ENCODE measurements at regions of chr5 and their contacts with region 1.

Region 1: GRCh38 chr5:81751009-81751835 is at the start of gene SSBP2:
- DNase-seq: peak; percentile 97 to 100
- H3K4me3 ChIP-seq: peak within 1 kb of the TSS; percentile 86 to 94
- H3K27ac ChIP-seq: peak within 1 kb of the TSS; percentile 98 to 100
- H3K4me1 ChIP-seq: peaks cover 8 to 38% of the 10 kb centered on the region in 2 donors
- H3K27me3 ChIP-seq: no peaks in the 10 kb centered on the region
- CTCF ChIP-seq: no peak
- total RNA-seq, gene SSBP2: 22.4 TPM

Region 2: DNA sequence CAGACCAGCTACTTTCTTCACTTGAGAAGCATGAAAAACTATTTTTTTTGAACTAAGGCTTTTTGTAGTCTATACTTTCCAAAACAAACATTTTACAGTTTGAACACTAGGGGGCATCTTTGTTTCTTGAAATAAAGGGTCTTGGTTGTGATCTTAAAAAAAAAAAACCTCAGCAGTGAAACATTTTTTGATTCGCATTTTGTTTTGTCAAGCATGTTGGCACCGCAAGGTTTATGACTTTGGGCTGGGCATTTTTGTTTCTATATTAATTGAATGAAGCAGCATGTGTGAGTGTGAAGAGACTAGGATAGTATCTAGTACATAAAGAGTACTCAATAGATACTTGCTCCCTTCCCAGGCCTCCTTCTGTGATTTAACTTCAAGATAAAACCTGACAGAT is 325.7 kb before region 1 on chr5:
- intact Hi-C with region 1: loop called (anchors 2 kb)
- DNase-seq: no peak
- H3K4me3 ChIP-seq: no peak overlapping the region
- H3K27ac ChIP-seq: peak overlapping the region; percentile 22 to 51
- H3K4me1 ChIP-seq: peaks cover 0 to 6% of the 10 kb centered on the region in 2 donors
- H3K27me3 ChIP-seq: no peaks in the 10 kb centered on the region
- CTCF ChIP-seq: peak; percentile 41 to 62 (median 54)

Region 3: DNA sequence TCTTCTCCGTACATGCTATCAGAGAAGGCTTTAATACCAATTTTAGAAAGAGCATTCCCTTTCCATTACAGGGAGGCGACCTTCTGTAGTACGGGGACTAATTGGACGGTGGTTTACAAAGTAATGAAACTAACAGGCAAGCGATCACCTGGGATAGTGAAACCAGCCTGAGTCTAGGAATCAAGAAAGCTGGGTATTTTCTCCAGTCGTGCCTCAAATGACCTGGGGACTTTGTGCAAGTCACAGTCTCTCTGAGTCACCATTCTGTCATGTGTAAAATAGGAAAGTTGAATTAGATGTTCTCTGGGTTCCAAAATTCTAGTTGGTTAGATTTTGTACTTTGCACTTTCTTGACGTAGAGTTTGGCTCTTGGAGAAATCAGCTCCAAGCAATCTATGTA is 22.4 kb after region 1 on chr5:
- intact Hi-C with region 1: loop called (anchors 1 kb)
- DNase-seq: no peak
- H3K4me3 ChIP-seq: peak overlapping the region in 1 of 2 donors; percentile 12
- H3K27ac ChIP-seq: peak overlapping the region; percentile 83 to 96
- H3K4me1 ChIP-seq: peaks cover 12 to 27% of the 10 kb centered on the region in 2 donors
- H3K27me3 ChIP-seq: no peaks in the 10 kb centered on the region
- CTCF ChIP-seq: no peak

Region 4: DNA sequence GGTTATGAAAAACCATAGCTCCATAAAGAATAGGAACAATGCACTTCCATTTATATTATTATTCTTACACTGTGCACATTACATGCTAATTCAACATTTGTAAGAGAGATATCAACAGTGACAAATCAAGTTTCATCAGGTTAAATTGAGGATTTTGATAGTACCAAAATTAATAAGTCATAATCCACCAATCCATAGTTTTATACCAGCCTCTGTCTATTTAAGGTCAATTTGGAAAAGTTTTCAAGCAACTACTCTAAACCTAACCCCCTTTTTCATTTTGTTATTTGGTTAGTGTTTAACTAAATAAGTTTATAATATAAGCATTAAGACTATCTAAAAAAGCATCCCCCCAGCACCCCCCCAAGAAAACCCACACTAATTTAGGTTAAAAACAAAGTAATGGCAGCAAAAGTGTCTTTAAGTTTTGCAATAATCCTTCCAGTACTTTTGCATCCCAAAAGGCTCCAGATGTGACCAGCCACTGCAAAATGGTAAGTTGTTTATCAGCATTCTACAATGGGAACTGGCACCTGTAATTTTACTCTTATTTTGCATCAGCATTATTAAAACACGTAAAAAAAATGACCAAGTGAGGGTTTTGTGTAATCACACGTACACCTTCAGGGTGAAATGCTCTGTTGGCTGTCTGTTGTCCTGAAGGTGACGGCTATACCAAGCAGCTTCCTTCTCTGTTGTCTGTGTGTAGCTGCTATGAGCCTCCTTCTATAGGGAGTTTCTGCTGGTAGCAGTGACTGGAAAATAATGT is 36.4 kb after region 1 on chr5:
- intact Hi-C with region 1: loop called (anchors 1 kb)
- DNase-seq: peak in 1 of 2 donors; percentile 83
- H3K4me3 ChIP-seq: peak overlapping the region in 1 of 2 donors; percentile 33
- H3K27ac ChIP-seq: peak overlapping the region in 1 of 2 donors; percentile 12
- H3K4me1 ChIP-seq: peaks cover 0 to 13% of the 10 kb centered on the region in 2 donors
- H3K27me3 ChIP-seq: no peaks in the 10 kb centered on the region
- CTCF ChIP-seq: no peak

Region 5: DNA sequence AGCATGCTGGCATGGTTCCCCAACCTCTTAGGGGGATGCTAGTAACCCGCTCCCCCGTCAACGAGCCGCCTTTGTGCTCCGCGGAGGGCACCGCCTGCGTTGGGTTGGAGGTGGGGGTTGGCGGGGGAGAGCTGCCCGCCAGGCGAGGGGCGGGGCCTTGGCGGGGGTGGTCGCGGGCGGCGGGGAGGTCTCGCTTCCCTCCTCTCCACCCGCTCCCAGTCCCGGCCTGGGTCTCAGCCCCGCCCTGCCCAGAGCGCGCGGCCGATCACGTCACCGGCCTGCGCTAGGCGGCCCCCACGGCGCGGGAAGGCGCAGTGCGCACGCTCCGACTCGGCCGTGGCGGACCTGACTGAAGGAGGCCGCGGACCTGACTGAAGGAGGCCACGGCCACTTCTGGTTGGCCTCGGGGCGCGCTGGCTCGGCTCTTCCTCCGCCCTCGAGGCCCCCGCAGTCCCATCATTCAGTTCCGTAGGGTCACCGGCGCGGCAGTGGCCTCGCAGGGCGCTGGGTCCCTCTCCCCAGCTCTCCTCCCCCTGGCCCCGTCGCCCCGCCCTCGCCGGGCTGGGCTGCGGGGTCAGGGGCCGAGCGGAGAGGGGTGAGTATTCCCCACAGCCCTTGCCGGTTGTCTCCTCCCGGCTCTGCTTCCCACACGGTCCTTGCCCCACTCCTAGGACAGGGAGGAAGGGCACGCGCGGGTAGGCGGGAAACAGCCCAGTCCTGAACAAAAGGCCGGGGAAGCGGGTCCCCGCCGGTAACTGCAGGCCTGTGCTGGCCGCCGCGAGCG is 220.7 kb after region 1 on chr5 and contains the start of gene ATG10:
- intact Hi-C with region 1: loop called (anchors 1 kb)
- DNase-seq: peak; percentile 58 to 94
- H3K4me3 ChIP-seq: peak within 1 kb of the TSS; percentile 81 to 85
- H3K27ac ChIP-seq: peak within 1 kb of the TSS; percentile 96 to 100
- H3K4me1 ChIP-seq: no peaks in the 10 kb centered on the region
- H3K27me3 ChIP-seq: no peaks in the 10 kb centered on the region
- CTCF ChIP-seq: no peak
- total RNA-seq, gene ATG10: 8.4 TPM

Region 6: GRCh38 chr5:82295144-82295543 is 543.9 kb after region 1 on chr5:
- intact Hi-C with region 1: no loop called
- DNase-seq: no peak
- H3K4me3 ChIP-seq: no peak overlapping the region
- H3K27ac ChIP-seq: no peak overlapping the region
- H3K4me1 ChIP-seq: no peaks in the 10 kb centered on the region
- H3K27me3 ChIP-seq: no peaks in the 10 kb centered on the region
- CTCF ChIP-seq: no peak

Measured in ascending aorta (tissue), 2 donors.